ENCODE measurements at regions of chr2 and their contacts with region 1.

Region 1: DNA sequence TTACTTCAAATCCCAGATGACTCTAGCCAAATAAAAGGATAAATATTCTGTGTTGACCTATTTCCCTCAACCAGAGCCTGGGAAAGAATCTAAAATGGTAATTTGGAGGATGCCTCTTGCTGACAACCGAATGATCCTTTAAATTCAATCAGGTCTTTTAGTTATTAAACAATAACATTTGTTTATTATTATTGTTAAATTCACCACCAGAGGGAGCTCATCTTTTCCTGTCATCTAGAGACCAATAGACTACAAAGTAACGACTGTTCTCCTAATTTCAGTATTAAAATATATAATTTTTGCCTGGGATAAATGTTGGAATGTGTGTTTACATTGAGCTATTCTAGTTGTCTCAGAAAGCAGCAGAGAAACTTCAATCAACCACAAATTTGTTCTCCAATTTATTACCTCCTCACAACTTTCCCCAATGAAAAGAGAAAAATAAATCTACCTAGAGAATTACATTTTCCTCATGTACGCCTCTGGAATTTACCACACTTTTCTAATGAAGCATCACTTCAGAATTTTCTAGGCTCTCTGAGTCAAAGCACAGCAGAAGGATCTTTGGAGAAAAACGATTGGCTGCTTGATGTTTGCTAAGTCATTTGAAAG is 142.7 kb downstream of the SCG2 start:
- DNase-seq: no peak
- ATAC-seq: no peak
- H3K4me3 ChIP-seq: no peak overlapping the region
- H3K27ac ChIP-seq: no peak overlapping the region
- H3K4me1 ChIP-seq: peaks cover 0 to 24% (median 0%) of the 10 kb centered on the region in 9 donors
- H3K27me3 ChIP-seq: no peaks in the 10 kb centered on the region
- CTCF ChIP-seq: peak in 8 of 9 donors; percentile 21 to 59 (median 42)

Region 2: GRCh38 chr2:223399357-223399957 is 60.0 kb before region 1 on chr2:
- intact Hi-C with region 1: no loop called
- DNase-seq: no peak
- ATAC-seq: peak in 1 of 8 donors; percentile 18
- H3K4me3 ChIP-seq: no peak overlapping the region
- H3K27ac ChIP-seq: no peak overlapping the region
- H3K4me1 ChIP-seq: no peaks in the 10 kb centered on the region
- H3K27me3 ChIP-seq: no peaks in the 10 kb centered on the region
- CTCF ChIP-seq: no peak

Region 3: GRCh38 chr2:223606946-223607345 is 147.5 kb after region 1 on chr2:
- intact Hi-C with region 1: loop called in 1 of 10 experiments (anchors 5 kb)
- DNase-seq: no peak
- ATAC-seq: no peak
- H3K4me3 ChIP-seq: no peak overlapping the region
- H3K27ac ChIP-seq: no peak overlapping the region
- H3K4me1 ChIP-seq: peaks cover 0 to 11% (median 0%) of the 10 kb centered on the region in 9 donors
- H3K27me3 ChIP-seq: peaks cover 0 to 9% (median 0%) of the 10 kb centered on the region in 7 donors
- CTCF ChIP-seq: no peak